Stomach (tissue), 19 donors: ENCODE measurements at regions of chr2 and their contacts with region 1.

Region 1: DNA sequence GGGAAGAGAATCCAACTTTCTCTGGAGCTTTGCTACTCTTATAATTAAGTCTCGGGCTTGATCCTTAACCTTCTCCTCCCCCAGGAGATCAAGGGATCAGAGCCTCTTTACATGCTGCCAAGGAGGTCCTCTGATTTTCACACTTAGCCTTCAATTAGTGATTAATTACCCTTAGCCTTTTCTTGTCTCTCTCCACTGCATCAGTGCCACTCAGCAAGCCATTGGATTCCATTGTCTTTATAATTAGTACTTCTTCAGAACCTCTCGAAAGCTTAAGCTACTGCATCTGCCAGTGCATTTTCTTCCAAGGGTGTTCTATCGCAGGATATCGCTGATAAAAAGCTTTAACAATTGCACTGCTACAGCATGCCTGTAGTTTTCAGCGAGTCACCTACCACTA is 477.0 kb upstream of the MEIS1 start:
- DNase-seq: no peak
- H3K4me3 ChIP-seq: no peak overlapping the region
- H3K27ac ChIP-seq: no peak overlapping the region
- H3K4me1 ChIP-seq: no peaks in the 10 kb centered on the region
- H3K27me3 ChIP-seq: no peaks in the 10 kb centered on the region
- CTCF ChIP-seq: no peak
- EP300 ChIP-seq: no peak
- POLR2A ChIP-seq: no peak

Region 2: GRCh38 chr2:65595641-65596040 is 362.2 kb before region 1 on chr2:
- intact Hi-C with region 1: no loop called
- DNase-seq: no peak
- H3K4me3 ChIP-seq: no peak overlapping the region
- H3K27ac ChIP-seq: no peak overlapping the region
- H3K4me1 ChIP-seq: no peaks in the 10 kb centered on the region
- H3K27me3 ChIP-seq: no peaks in the 10 kb centered on the region
- CTCF ChIP-seq: no peak
- EP300 ChIP-seq: no peak
- POLR2A ChIP-seq: no peak

Region 3: GRCh38 chr2:65658881-65659280 is 299.0 kb before region 1 on chr2:
- intact Hi-C with region 1: no loop called
- DNase-seq: no peak
- H3K4me3 ChIP-seq: no peak overlapping the region
- H3K27ac ChIP-seq: no peak overlapping the region
- H3K4me1 ChIP-seq: peaks cover 0 to 19% (median 7%) of the 10 kb centered on the region in 4 donors
- H3K27me3 ChIP-seq: no peaks in the 10 kb centered on the region
- CTCF ChIP-seq: no peak
- EP300 ChIP-seq: no peak
- POLR2A ChIP-seq: no peak

Region 4: GRCh38 chr2:65974067-65974723 is 16.3 kb after region 1 on chr2:
- intact Hi-C with region 1: loop called (anchors 2 kb)
- DNase-seq: no peak
- H3K4me3 ChIP-seq: no peak overlapping the region
- H3K27ac ChIP-seq: no peak overlapping the region
- H3K4me1 ChIP-seq: no peaks in the 10 kb centered on the region
- H3K27me3 ChIP-seq: no peaks in the 10 kb centered on the region
- CTCF ChIP-seq: no peak
- EP300 ChIP-seq: no peak
- POLR2A ChIP-seq: no peak

Region 5: GRCh38 chr2:66255867-66256266 is 298.0 kb after region 1 on chr2:
- intact Hi-C with region 1: no loop called
- DNase-seq: no peak
- H3K4me3 ChIP-seq: no peak overlapping the region
- H3K27ac ChIP-seq: no peak overlapping the region
- H3K4me1 ChIP-seq: no peaks in the 10 kb centered on the region
- H3K27me3 ChIP-seq: no peaks in the 10 kb centered on the region
- CTCF ChIP-seq: no peak
- EP300 ChIP-seq: no peak
- POLR2A ChIP-seq: no peak